Activated B cell treated with CpG ODN at 0.5 μM for 24 hours (primary cell): ENCODE measurements at regions of chr19 and their contacts with region 1.

Region 1: DNA sequence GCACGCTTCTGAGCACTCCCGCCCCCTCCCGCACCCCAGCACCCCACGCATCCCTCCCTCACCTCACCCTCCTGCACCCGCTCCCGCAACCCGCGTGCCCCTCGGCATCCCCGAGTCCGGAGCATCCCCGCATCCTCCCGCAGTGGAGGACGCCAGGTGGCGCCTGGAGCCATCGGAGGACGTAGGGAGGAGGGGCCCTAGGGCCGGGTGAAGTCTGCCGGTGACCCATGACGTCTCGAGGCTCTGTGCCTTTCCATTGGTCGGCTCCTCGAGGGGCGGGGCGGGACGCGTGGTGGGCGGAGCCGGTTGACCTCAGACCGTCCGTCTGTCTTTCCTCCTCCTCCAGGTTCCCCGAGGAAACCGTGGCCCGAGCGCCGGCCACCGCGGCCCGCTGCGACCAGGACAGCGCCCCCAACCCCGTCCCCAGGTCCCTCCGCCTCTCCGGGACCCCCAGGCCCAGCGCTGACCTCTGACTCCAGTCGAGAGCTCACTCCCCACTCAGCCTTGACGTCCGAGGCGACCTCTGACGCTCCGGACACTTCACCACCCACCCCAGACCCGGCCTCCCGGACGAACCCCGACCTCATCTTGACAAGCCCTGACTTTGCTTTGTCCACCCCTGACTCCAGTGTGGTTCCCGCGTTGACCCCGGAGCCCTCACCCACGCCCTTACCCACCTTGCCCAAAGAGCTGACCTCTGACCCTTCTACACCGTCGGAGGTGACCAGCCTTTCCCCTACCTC is 19.9 kb downstream of the SBK2 start:
- DNase-seq: peak; percentile 92
- ATAC-seq: peak; percentile 100
- H3K4me3 Mint-ChIP-seq: peak overlapping the region; percentile 76
- H3K27ac Mint-ChIP-seq: peak overlapping the region; percentile 87
- H3K4me1 Mint-ChIP-seq: peaks cover 3% of the 10 kb centered on the region
- H3K27me3 Mint-ChIP-seq: peaks cover 10% of the 10 kb centered on the region
- CTCF ChIP-seq: no peak

Region 2: DNA sequence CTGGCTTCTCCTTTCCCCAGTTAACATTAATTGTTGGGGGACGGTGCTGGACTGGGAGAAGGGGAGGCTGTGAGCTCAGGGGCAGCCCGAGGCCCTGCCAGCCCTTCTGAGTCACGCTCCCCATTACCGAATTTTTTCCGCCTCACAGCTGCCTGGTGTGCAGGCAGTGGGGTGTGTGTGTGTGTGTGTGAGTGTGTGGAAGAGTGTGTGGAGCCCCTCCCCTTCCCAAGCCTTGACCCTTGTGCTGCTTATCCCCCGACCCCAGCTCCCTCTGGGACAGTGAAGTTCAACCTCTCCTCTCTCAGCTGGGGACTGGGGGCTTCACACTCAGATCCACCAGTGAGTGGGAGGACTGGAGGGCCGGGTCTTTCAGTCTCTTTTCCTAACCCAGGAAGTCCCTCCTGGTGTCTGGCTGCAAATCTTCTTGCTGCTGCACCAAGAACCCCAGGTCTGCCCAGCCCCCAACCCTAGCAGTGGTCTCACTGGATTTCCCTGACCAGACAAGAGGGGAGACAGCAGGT is 29.4 kb before region 1 on chr19:
- CTCF ChIA-PET with region 1: no interaction called
- POLR2A ChIA-PET with region 1: no interaction called
- intact Hi-C with region 1: no loop called
- DNase-seq: no peak
- ATAC-seq: no peak
- H3K4me3 Mint-ChIP-seq: no peak overlapping the region
- H3K27ac Mint-ChIP-seq: peak overlapping the region; percentile 24
- H3K4me1 Mint-ChIP-seq: peaks cover 14% of the 10 kb centered on the region
- H3K27me3 Mint-ChIP-seq: peaks cover 8% of the 10 kb centered on the region
- CTCF ChIP-seq: no peak

Region 3: GRCh38 chr19:55586976-55587668 is 70.1 kb after region 1 on chr19:
- CTCF ChIA-PET with region 1: no interaction called
- POLR2A ChIA-PET with region 1: interaction called, 4 read pairs
- intact Hi-C with region 1: loop called (anchors 2 kb)
- DNase-seq: peak; percentile 89
- ATAC-seq: peak; percentile 96
- H3K4me3 Mint-ChIP-seq: peak overlapping the region; percentile 85
- H3K27ac Mint-ChIP-seq: peak overlapping the region; percentile 72
- H3K4me1 Mint-ChIP-seq: peaks cover 29% of the 10 kb centered on the region
- H3K27me3 Mint-ChIP-seq: no peaks in the 10 kb centered on the region
- CTCF ChIP-seq: no peak

Region 4: GRCh38 chr19:55809381-55810058 is 292.5 kb after region 1 on chr19:
- CTCF ChIA-PET with region 1: no interaction called
- POLR2A ChIA-PET with region 1: no interaction called
- intact Hi-C with region 1: loop called (anchors 2 kb)
- DNase-seq: peak; percentile 19
- ATAC-seq: peak; percentile 97
- H3K4me3 Mint-ChIP-seq: peak overlapping the region; percentile 52
- H3K27ac Mint-ChIP-seq: peak overlapping the region; percentile 27
- H3K4me1 Mint-ChIP-seq: peaks cover 7% of the 10 kb centered on the region
- H3K27me3 Mint-ChIP-seq: peaks cover 4% of the 10 kb centered on the region
- CTCF ChIP-seq: no peak